ENCODE measurements at regions of chr7 and their contacts with region 1.

Region 1: DNA sequence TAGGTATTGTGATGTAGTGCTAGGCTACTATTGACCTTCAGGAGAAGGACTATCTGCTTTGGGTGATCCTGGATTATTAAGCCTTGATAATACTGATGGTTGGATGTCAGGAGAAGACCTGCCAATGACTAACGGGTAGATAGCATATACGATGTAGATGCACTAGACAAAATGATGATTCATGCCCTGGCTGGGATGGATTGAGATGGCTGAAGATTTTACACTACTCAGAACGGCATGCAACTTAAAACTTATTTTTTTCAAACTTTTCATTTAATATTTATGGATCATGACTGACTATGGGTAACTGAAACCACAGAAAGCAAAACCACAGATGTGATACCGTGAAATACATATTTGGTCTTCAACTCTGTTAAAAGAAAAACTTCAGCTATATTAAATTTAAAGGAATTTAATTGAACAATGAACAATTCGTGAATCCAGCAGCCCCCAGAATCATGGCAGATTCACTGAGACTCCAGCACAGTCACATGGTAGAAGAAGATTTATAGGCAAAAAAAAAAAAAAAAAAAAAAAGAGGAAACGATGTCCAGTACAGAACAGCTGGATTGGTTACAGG is 124.6 kb upstream of the CDK13 start:
- DNase-seq: no peak
- H3K4me3 ChIP-seq: no peak overlapping the region
- H3K4me3 Mint-ChIP-seq: no peak overlapping the region
- H3K27ac ChIP-seq: no peak overlapping the region
- H3K27ac Mint-ChIP-seq: no peak overlapping the region
- H3K4me1 ChIP-seq: no peaks in the 10 kb centered on the region
- H3K4me1 Mint-ChIP-seq: no peaks in the 10 kb centered on the region
- H3K27me3 ChIP-seq: peaks cover 6% of the 10 kb centered on the region
- H3K27me3 Mint-ChIP-seq: peaks cover 11 to 64% of the 10 kb centered on the region in 2 donors

Region 2: GRCh38 chr7:39838326-39838725 is 12.8 kb after region 1 on chr7:
- CTCF ChIA-PET with region 1: no interaction called
- POLR2A ChIA-PET with region 1: interaction called, 15 read pairs
- DNase-seq: no peak
- H3K4me3 ChIP-seq: no peak overlapping the region
- H3K4me3 Mint-ChIP-seq: no peak overlapping the region
- H3K27ac ChIP-seq: no peak overlapping the region
- H3K27ac Mint-ChIP-seq: no peak overlapping the region
- H3K4me1 ChIP-seq: no peaks in the 10 kb centered on the region
- H3K4me1 Mint-ChIP-seq: peaks cover 0 to 7% (median 3%) of the 10 kb centered on the region in 3 donors
- H3K27me3 ChIP-seq: no peaks in the 10 kb centered on the region
- H3K27me3 Mint-ChIP-seq: peaks cover 25 to 72% of the 10 kb centered on the region in 2 donors

Region 3: DNA sequence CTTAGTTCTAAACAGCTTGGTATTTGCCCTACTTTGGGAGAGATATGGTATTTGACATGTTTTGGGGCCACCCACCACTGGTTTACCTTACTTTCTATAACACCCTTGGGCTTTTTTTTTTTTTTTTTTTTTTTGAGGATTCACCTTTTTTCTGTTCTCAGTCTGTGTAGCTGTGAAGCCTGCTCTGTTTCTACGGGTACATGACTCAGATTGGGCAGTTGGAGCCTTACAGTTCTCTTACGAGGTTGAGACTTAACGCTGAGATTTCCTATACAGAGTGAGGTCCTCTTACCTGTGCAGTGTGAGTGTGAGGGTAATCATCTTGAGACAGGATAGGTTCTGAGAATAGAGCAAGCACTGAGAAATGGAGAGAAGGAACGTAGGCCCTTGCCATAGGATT is 202.1 kb after region 1 on chr7:
- CTCF ChIA-PET with region 1: no interaction called
- POLR2A ChIA-PET with region 1: no interaction called
- DNase-seq: no peak
- H3K4me3 ChIP-seq: no peak overlapping the region
- H3K4me3 Mint-ChIP-seq: no peak overlapping the region
- H3K27ac ChIP-seq: no peak overlapping the region
- H3K27ac Mint-ChIP-seq: peak overlapping the region in 2 of 8 donors; percentile 15 to 76
- H3K4me1 ChIP-seq: no peaks in the 10 kb centered on the region
- H3K4me1 Mint-ChIP-seq: peaks cover 18 to 38% (median 29%) of the 10 kb centered on the region in 3 donors
- H3K27me3 ChIP-seq: no peaks in the 10 kb centered on the region
- H3K27me3 Mint-ChIP-seq: no peaks in the 10 kb centered on the region